Common myeloid progenitor, CD34-positive (primary cell): ENCODE measurements at regions of chr5 and their contacts with region 1.

Region 1: DNA sequence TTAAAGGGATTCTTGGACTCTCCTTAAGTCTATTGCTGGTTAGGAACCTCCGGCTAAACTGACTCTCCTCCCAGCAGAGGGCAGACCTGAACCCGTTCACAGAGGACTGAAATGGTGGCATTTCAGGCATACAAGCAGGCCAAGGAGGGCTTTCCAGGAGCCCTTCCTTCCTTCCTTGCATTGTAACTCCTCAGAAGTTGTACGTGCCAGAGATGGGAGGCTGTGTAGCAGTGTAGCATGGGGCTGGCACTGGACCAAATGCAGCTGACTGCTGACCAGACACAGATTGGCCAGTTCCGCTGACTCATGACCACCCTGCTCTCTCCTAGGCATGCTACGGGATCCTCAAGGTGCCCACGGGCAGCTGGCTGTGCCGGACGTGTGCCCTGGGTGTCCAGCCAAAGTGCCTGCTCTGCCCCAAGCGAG is 36.4 kb downstream of the JADE2 start:
- DNase-seq: peak in 2 of 3 donors; percentile 35 to 37
- H3K4me3 ChIP-seq: no peak overlapping the region
- H3K27ac ChIP-seq: peak overlapping the region in 1 of 2 experiments; percentile 22
- H3K4me1 ChIP-seq: peaks cover 0 to 3% (median under 1%) of the 10 kb centered on the region in 4 experiments
- H3K27me3 ChIP-seq: no peaks in the 10 kb centered on the region

Region 2: GRCh38 chr5:134533115-134533815 is 28.6 kb before region 1 on chr5:
- CTCF ChIA-PET with region 1: interaction called, 12 read pairs
- POLR2A ChIA-PET with region 1: no interaction called
- DNase-seq: no peak
- H3K4me3 ChIP-seq: no peak overlapping the region
- H3K27ac ChIP-seq: peak overlapping the region in 1 of 2 experiments; percentile 39
- H3K4me1 ChIP-seq: peaks cover 5 to 56% (median 30%) of the 10 kb centered on the region in 4 experiments
- H3K27me3 ChIP-seq: no peaks in the 10 kb centered on the region

Region 3: DNA sequence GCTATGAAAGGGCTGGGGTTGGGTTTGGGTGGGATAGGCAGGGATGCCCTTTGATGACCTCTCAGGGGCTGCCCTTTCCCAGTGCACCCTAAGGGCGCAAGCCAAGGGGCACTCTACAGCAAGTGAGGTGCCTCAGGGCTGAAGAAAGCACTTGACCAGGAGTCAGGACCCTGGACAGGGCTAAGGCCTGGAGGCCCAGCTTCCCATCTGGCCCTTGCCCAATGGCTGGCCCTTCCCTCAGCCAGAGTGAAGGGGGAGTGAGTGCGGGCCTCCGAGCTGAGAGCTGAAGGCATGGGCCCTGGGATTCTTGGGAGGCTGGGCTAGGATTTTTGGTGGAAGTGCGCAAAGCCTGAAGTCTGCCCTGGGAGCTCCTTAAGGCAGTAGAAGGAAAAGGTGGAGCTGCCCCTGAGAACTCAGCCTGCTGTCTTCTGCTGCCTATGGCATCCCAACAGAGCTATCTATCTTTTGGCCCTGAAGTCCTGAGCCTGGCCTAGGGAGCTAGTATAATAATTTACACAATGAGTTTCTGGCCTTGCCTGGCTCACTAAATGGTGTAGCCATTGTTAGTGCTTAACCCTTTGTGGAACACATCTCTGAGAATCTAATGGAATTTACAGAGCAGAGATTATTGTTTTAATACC is 20.0 kb before region 1 on chr5:
- CTCF ChIA-PET with region 1: interaction called, 30 read pairs
- POLR2A ChIA-PET with region 1: interaction called, 5 read pairs
- DNase-seq: no peak
- H3K4me3 ChIP-seq: no peak overlapping the region
- H3K27ac ChIP-seq: peak overlapping the region in 1 of 2 experiments; percentile 32
- H3K4me1 ChIP-seq: peaks cover 17 to 47% (median 42%) of the 10 kb centered on the region in 4 experiments
- H3K27me3 ChIP-seq: no peaks in the 10 kb centered on the region

Region 4: GRCh38 chr5:134586866-134587524 is 25.1 kb after region 1 on chr5:
- CTCF ChIA-PET with region 1: interaction called, 10 read pairs
- POLR2A ChIA-PET with region 1: no interaction called
- DNase-seq: peak; percentile 93 to 96 (median 95)
- H3K4me3 ChIP-seq: peak overlapping the region in 3 of 7 experiments; percentile 32 to 46 (median 42)
- H3K27ac ChIP-seq: no peak overlapping the region
- H3K4me1 ChIP-seq: peaks cover 0 to 9% (median 4%) of the 10 kb centered on the region in 4 experiments
- H3K27me3 ChIP-seq: no peaks in the 10 kb centered on the region